WTC11 (cell line): ENCODE measurements at regions of chr9 and their contacts with region 1.

Region 1: DNA sequence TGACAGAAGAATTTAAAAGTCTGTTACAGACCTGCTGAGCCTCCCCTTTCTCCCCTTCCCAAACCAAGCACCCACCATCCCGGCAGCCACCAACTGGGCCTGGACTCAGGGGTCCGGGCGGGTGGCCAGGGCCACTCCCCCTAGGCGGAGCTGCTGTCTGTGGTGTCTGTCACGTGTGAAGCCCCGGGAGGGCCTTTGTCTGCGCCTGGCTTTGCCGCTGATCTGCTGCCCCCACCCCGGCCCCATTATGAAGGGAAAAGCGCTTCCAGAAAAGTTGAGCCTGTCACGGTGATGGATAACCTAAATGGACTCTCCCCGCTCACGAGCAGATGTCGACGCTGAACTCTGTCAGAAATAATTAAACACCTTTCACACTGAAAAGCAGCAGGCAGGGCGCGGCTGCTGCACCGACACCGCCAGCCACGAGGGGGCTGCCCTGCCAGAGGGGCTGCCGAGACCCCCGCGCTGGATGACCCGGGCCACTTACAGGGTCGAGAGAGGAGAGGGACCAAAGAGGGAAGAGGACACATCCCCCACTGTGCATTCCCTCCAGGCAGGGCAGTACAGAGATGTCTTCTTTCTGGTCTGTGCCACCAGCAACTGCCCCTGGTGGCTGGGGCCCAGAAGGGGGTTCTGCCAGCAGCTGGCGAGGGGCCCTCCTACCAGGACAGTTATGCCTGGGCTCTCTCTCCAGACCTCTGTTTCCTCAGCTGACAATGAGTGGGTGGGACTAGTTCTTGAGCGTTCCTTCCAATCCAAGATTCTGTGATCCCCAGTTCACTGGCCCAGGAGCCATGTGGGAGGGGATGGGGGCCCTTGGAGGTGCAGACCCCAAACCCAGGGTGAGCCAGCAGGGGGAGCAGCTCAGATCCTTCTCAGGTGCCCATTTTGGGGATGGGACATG is 36.0 kb upstream of the BARHL1 start:
- DNase-seq: peak; percentile 78
- ATAC-seq: peak; percentile 70
- H3K4me3 Mint-ChIP-seq: peak overlapping the region; percentile 66
- H3K27ac Mint-ChIP-seq: no peak overlapping the region
- H3K4me1 Mint-ChIP-seq: peaks cover 24% of the 10 kb centered on the region
- H3K27me3 Mint-ChIP-seq: no peaks in the 10 kb centered on the region
- CTCF ChIP-seq: peak; percentile 45

Region 2: DNA sequence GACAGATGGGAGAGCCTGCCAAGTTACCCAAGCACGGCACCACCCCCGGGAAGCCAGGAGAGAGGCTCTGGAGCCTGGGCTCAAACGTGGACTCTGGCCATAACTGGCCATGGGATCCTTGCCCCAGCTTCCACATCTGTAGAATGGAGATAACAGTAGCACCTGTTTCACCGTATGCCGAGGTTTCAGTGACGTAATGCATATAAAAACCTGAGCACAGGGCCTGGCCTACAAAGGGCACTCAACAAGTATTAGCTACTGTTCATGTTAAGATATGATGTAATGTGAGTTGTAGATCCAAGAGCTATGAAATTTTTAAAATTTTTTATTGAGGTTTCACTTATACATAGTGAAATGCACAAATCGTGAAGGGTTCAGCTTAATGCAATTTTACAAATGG is 46.2 kb before region 1 on chr9:
- CTCF ChIA-PET with region 1: interaction called, 22 read pairs
- POLR2A ChIA-PET with region 1: no interaction called
- DNase-seq: no peak
- ATAC-seq: no peak
- H3K4me3 Mint-ChIP-seq: no peak overlapping the region
- H3K27ac Mint-ChIP-seq: no peak overlapping the region
- H3K4me1 Mint-ChIP-seq: peaks cover 16% of the 10 kb centered on the region
- H3K27me3 Mint-ChIP-seq: no peaks in the 10 kb centered on the region
- CTCF ChIP-seq: no peak

Region 3: DNA sequence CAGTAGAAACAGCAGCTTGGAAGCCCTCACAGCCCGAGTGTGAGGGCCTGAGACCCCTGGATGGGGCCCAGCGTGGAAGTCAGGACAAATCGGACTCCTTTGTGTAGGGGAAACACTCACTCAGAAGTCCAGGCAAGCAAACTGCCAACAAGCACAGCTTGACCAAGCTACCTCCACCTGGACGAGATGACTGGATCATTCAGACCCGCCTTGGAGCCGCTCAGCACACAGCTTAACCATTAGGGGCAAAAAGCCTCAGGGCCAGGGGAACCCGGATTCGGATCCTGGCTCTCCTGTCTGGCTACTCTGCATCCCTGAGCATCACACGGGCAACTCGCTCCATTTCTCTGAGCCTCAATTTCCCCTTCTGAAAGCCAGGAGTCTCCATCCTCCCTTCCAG is 28.2 kb before region 1 on chr9:
- CTCF ChIA-PET with region 1: interaction called, 10 read pairs
- POLR2A ChIA-PET with region 1: no interaction called
- DNase-seq: no peak
- ATAC-seq: no peak
- H3K4me3 Mint-ChIP-seq: no peak overlapping the region
- H3K27ac Mint-ChIP-seq: no peak overlapping the region
- H3K4me1 Mint-ChIP-seq: 0 out of 2 replicates have a peak, but pooled peaks cover 3% of the 10 kb centered on the region
- H3K27me3 Mint-ChIP-seq: no peaks in the 10 kb centered on the region
- CTCF ChIP-seq: no peak

Region 4: DNA sequence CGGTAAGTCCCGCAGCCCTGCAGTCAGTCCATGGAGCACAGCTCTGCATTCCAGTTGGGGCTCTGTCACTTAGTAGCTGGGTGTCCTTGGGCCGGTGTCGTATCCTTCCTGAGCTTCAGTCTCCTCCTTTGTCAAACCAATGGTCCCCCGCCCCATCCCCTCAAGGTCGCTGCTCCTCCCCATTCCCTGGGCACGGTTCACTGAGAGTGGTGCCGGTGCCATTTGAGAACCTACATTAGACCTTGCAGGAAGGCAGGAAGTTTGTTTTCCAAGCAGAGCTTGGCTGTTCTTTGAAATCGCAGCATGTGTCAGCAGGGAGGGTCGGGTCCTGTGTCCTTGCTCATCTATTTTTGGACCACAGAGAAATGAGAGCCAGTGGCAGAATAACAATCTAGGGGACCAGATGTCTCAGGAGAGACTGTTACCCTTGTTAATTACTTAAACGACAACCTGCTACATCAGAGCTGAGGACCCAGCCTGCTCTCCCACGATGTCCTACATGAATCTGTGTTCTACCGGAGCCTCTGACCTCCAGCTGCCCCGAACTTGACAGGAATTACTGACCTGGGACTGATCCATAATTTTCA is 14.3 kb after region 1 on chr9:
- CTCF ChIA-PET with region 1: interaction called, 63 read pairs
- POLR2A ChIA-PET with region 1: no interaction called
- DNase-seq: no peak
- ATAC-seq: no peak
- H3K4me3 Mint-ChIP-seq: no peak overlapping the region
- H3K27ac Mint-ChIP-seq: no peak overlapping the region; the same call in 1 of the 2 replicates
- H3K4me1 Mint-ChIP-seq: peaks cover 12% of the 10 kb centered on the region
- H3K27me3 Mint-ChIP-seq: no peaks in the 10 kb centered on the region
- CTCF ChIP-seq: no peak